ENCODE measurements at regions of chr2 and their contacts with region 1.

Region 1: GRCh38 chr2:232142049-232142448 is 180.5 kb downstream of the DIS3L2 start:
- DNase-seq: peak; percentile 39 to 49 (median 40)
- ATAC-seq: peak; percentile 64 to 67
- H3K4me3 ChIP-seq: no peak overlapping the region
- H3K27ac ChIP-seq: no peak overlapping the region
- H3K4me1 ChIP-seq: no peaks in the 10 kb centered on the region
- H3K27me3 ChIP-seq: no peaks in the 10 kb centered on the region

Region 2: GRCh38 chr2:231925303-231926179 is 216.5 kb before region 1 on chr2:
- intact Hi-C with region 1: loop called (anchors 5 kb)
- DNase-seq: peak; percentile 89 to 95 (median 94)
- ATAC-seq: peak; percentile 89 to 94
- H3K4me3 ChIP-seq: peak overlapping the region; percentile 18
- H3K27ac ChIP-seq: no peak overlapping the region
- H3K4me1 ChIP-seq: peaks cover 2% of the 10 kb centered on the region
- H3K27me3 ChIP-seq: no peaks in the 10 kb centered on the region

Region 3: GRCh38 chr2:232273903-232274643 is 132.0 kb after region 1 on chr2:
- intact Hi-C with region 1: no loop called
- DNase-seq: no peak
- ATAC-seq: peak; percentile 62 to 64
- H3K4me3 ChIP-seq: no peak overlapping the region
- H3K27ac ChIP-seq: no peak overlapping the region
- H3K4me1 ChIP-seq: peaks cover 3% of the 10 kb centered on the region
- H3K27me3 ChIP-seq: no peaks in the 10 kb centered on the region